Activated CD4-positive, alpha-beta T cell treated with anti-CD3 and anti-CD28 coated beads, Interleukin-2, amount 10 ng/mL, durations not matched to agents 24 days and 14 days (primary cell): ENCODE measurements at regions of chr9 and their contacts with region 1.

Region 1: DNA sequence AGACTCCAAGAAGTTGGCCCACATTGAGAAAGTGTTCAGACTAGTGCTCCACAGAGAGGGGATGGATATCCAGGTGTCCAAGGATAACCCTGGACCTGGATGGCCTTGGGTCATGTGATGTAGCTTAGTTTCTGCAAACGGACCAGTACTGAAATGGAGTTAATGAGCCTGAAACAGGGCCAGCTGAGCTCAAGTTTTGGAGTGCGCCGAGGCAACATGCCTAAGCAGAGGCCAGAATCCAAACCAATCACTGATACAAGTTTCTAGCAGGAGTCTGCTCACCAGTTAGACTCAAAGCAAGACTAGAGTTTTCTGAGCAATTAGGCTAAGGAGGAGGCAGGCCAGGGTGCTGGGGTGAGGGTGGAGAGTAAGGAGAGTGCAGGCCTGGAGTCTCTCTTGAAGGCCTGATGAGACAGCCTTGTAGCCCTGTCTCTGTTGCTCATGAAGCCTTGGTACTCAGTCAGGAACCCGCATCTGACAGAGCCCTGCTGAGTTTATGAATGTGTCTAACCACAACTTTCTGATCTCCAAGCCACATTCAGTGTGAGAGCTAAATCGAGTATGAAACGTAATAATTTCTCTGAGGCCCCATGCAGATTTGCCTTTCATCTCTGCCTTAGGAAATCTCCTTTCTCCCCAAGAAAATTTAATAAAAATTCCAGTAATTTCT is 68.9 kb upstream of the EQTN start:
- DNase-seq: peak; percentile 88
- H3K4me3 Mint-ChIP-seq: peak overlapping the region; percentile 52
- H3K27ac Mint-ChIP-seq: peak overlapping the region; percentile 65
- H3K4me1 Mint-ChIP-seq: peaks cover 37% of the 10 kb centered on the region
- H3K27me3 Mint-ChIP-seq: peaks cover 5% of the 10 kb centered on the region

Region 2: DNA sequence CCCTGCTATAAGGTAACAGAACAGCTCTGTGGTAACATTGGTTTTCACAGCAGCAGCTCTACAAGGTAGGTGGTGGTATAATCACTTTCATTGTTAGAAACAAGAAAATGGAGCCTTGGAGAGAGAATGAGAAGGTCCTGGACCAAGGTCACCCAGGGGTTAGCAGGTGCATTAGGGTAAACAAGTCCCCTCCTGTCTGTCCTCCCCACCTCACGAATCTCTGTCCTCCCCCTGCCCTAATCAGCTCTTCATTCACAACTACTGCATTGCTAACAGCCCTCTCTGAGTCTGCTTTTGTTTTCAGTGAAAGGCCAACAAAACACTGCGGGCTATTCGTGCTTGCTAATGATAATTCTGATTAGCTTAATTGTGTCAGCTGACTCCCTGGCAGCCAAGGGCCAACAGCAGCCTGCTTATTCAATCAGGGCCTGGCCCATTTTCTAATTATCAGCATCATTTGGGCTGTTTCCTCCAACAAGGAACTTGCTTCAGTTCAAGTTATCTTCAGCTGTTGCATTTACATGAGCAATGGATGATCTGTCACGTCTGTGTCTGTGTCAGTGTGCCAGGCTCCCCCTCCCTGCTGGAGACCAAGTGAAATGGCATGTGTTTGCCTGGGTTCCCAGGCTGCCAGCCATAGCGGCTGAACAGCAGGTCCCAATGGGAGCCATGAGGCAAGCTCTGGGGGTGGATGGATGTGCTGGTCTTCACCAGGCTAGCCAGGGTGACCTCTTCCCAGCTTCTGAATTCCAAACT is 12.2 kb before region 1 on chr9:
- intact Hi-C with region 1: loop called (anchors 2 kb)
- DNase-seq: no peak
- H3K4me3 Mint-ChIP-seq: no peak overlapping the region
- H3K27ac Mint-ChIP-seq: no peak overlapping the region
- H3K4me1 Mint-ChIP-seq: peaks cover 33% of the 10 kb centered on the region
- H3K27me3 Mint-ChIP-seq: no peaks in the 10 kb centered on the region

Region 3: GRCh38 chr9:27430750-27431535 is 65.1 kb after region 1 on chr9:
- intact Hi-C with region 1: loop called (anchors 5 kb)
- DNase-seq: no peak
- H3K4me3 Mint-ChIP-seq: no peak overlapping the region
- H3K27ac Mint-ChIP-seq: no peak overlapping the region
- H3K4me1 Mint-ChIP-seq: peaks cover 16% of the 10 kb centered on the region
- H3K27me3 Mint-ChIP-seq: no peaks in the 10 kb centered on the region

Region 4: GRCh38 chr9:27529316-27530278 is 163.8 kb after region 1 on chr9 and contains the start of gene MOB3B:
- intact Hi-C with region 1: loop called (anchors 1 kb)
- DNase-seq: peak; percentile 94
- H3K4me3 Mint-ChIP-seq: peak within 1 kb of the TSS; percentile 90
- H3K27ac Mint-ChIP-seq: peak within 1 kb of the TSS; percentile 72
- H3K4me1 Mint-ChIP-seq: peaks cover 11% of the 10 kb centered on the region
- H3K27me3 Mint-ChIP-seq: peaks cover 39% of the 10 kb centered on the region
- total RNA-seq, gene MOB3B: 0.82 and 1.1 TPM in 2 replicates

Region 5: DNA sequence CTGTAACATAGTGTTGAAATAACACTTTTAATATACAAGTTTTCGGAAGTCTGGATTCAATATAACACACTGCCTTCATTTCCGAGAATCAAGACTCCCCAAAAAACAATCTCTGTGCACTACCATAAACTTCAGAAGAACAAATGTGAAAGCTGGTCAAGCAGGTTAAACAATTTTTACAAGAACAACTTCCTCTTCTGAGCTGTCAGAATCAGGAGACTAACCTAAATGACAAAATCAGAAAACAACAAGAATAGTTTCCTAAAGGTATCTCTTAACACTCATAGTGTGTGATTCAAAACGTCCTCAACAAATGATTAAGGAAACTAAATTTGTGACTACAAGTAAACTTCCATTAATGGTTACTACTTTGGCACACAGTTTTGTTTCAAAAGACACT is 195.8 kb after region 1 on chr9:
- intact Hi-C with region 1: no loop called
- DNase-seq: no peak
- H3K4me3 Mint-ChIP-seq: no peak overlapping the region
- H3K27ac Mint-ChIP-seq: peak overlapping the region; percentile 14
- H3K4me1 Mint-ChIP-seq: peaks cover 18% of the 10 kb centered on the region
- H3K27me3 Mint-ChIP-seq: no peaks in the 10 kb centered on the region

Region 6: GRCh38 chr9:27785714-27786100 is 419.9 kb after region 1 on chr9:
- intact Hi-C with region 1: loop called (anchors 2 kb)
- DNase-seq: peak; percentile 60
- H3K4me3 Mint-ChIP-seq: peak overlapping the region; percentile 46
- H3K27ac Mint-ChIP-seq: peak overlapping the region; percentile 85
- H3K4me1 Mint-ChIP-seq: peaks cover 15% of the 10 kb centered on the region
- H3K27me3 Mint-ChIP-seq: peaks cover 11% of the 10 kb centered on the region